Activated T-helper 1 cell treated with anti-CD3 and anti-CD28 coated beads, Interleukin-12 subunit alpha, Interleukin-12 subunit beta, Interleukin-2, Interleukin-4 antibody, amounts not matched to agents 30 ng/mL and 10 ng/mL and 1 ng/mL, durations not matched to agents 14 hours and 24 hours and 36 hours (primary cell): ENCODE measurements at regions of chr5 and their contacts with region 1.

Region 1: GRCh38 chr5:73454351-73455036 is 5.9 kb upstream of the FOXD1 start:
- DNase-seq: no peak
- H3K4me3 Mint-ChIP-seq: no peak overlapping the region
- H3K27ac Mint-ChIP-seq: no peak overlapping the region
- H3K4me1 Mint-ChIP-seq: peaks cover 7% of the 10 kb centered on the region
- H3K27me3 Mint-ChIP-seq: peaks cover 52% of the 10 kb centered on the region

Region 2: GRCh38 chr5:73081093-73081492 is 373.4 kb before region 1 on chr5:
- intact Hi-C with region 1: loop called (anchors 5 kb)
- DNase-seq: no peak
- H3K4me3 Mint-ChIP-seq: no peak overlapping the region
- H3K27ac Mint-ChIP-seq: no peak overlapping the region
- H3K4me1 Mint-ChIP-seq: no peaks in the 10 kb centered on the region
- H3K27me3 Mint-ChIP-seq: peaks cover 13% of the 10 kb centered on the region

Region 3: GRCh38 chr5:73498057-73499008 is 43.8 kb after region 1 on chr5 and contains the start of gene BTF3:
- intact Hi-C with region 1: loop called (anchors 2 kb)
- DNase-seq: peak; percentile 92
- H3K4me3 Mint-ChIP-seq: peak within 1 kb of the TSS; percentile 99
- H3K27ac Mint-ChIP-seq: peak within 1 kb of the TSS; percentile 99
- H3K4me1 Mint-ChIP-seq: peaks cover 39% of the 10 kb centered on the region
- H3K27me3 Mint-ChIP-seq: peaks cover 12% of the 10 kb centered on the region
- total RNA-seq, gene BTF3: 913 and 929 TPM in 2 replicates

Region 4: DNA sequence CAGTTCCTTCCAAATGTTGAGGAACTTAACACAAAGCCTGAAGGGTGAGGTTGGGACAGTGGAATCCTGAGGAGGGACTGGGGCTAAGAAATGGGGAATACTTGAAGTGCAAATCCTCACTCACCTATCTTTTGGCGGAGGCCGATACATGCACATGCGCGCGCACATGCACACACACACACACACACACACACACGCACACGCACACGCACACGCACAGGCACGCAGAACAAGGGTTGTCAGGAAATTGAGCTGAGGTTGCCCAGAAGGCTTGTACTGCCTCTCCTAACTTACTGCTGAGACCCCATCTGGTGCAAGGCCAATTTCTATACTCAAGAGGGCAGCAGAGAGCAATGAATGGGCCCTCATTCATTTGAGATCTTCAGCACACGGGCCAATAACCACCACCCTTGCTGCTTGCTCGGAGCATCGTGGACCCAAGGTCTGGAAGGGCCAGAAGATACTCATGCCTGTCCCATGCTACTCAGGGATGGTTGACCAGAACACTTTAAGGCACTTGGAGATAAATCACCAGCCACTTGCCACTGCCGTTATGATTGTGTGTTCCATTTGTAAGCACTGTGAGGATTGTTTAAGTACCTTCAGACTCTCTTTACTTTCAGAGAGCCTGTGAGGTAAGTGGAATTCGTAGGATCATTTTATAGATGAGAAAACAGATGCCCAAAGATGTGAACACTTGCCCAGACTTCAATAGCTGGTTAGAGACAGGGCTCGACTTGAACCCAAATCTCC is 65.2 kb after region 1 on chr5:
- intact Hi-C with region 1: no loop called
- DNase-seq: peak; percentile 70
- H3K4me3 Mint-ChIP-seq: peak overlapping the region; percentile 40
- H3K27ac Mint-ChIP-seq: peak overlapping the region; percentile 48
- H3K4me1 Mint-ChIP-seq: peaks cover 10% of the 10 kb centered on the region
- H3K27me3 Mint-ChIP-seq: peaks cover 2% of the 10 kb centered on the region

Region 5: GRCh38 chr5:73540192-73540591 is 85.7 kb after region 1 on chr5:
- intact Hi-C with region 1: loop called (anchors 2 kb)
- DNase-seq: no peak
- H3K4me3 Mint-ChIP-seq: no peak overlapping the region
- H3K27ac Mint-ChIP-seq: no peak overlapping the region
- H3K4me1 Mint-ChIP-seq: peaks cover 21% of the 10 kb centered on the region
- H3K27me3 Mint-ChIP-seq: no peaks in the 10 kb centered on the region

Region 6: GRCh38 chr5:74336297-74336696 is 881.8 kb after region 1 on chr5:
- intact Hi-C with region 1: no loop called
- DNase-seq: no peak
- H3K4me3 Mint-ChIP-seq: no peak overlapping the region
- H3K27ac Mint-ChIP-seq: no peak overlapping the region
- H3K4me1 Mint-ChIP-seq: no peaks in the 10 kb centered on the region
- H3K27me3 Mint-ChIP-seq: peaks cover 6% of the 10 kb centered on the region